Posterior vena cava (tissue), 2 donors: ENCODE measurements at regions of chr3 and their contacts with region 1.

Region 1: DNA sequence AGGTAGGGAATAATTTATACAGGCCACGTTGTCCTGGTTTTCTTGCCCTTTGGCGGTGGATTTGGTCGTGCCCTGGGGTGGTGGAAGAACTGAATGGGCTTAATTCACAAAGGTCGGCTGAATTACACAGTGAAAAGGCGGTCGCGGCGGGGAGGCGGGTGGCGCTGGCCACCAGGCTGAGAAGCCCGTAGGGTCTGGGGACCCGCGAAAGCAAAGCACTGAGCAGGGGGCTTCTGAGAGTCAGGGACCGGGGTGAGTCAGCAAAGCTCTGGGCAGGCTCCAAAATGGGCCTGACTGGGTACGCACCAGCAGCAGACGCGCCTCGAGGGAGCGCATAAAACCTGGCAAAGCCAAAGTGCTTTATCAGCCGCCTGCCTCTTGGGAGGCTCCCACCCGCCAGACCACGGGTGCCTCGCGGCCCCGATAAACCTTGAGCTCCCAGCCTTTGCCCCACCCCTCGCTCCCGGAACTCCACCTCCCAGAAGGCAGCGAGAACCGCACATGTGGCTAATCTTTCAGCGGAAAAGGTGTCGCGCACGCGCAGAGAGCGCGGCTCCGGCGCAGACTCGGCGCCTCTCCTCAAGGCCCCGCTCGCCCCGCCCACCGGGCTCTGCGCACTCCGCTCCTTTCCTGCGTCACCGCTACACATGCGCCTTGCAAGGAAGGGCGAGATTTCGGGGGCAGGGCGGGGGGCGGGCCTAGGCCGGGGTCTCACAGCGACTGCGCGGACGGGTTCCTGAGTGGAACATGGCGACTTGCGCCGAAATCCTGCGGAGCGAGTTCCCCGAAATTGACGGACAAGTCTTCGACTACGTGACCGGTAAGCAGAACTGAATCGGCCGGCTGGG is at the start of gene ABCF3:
- DNase-seq: peak; percentile 100
- total RNA-seq, gene ABCF3: 38.9 to 48.8 TPM

Region 2: DNA sequence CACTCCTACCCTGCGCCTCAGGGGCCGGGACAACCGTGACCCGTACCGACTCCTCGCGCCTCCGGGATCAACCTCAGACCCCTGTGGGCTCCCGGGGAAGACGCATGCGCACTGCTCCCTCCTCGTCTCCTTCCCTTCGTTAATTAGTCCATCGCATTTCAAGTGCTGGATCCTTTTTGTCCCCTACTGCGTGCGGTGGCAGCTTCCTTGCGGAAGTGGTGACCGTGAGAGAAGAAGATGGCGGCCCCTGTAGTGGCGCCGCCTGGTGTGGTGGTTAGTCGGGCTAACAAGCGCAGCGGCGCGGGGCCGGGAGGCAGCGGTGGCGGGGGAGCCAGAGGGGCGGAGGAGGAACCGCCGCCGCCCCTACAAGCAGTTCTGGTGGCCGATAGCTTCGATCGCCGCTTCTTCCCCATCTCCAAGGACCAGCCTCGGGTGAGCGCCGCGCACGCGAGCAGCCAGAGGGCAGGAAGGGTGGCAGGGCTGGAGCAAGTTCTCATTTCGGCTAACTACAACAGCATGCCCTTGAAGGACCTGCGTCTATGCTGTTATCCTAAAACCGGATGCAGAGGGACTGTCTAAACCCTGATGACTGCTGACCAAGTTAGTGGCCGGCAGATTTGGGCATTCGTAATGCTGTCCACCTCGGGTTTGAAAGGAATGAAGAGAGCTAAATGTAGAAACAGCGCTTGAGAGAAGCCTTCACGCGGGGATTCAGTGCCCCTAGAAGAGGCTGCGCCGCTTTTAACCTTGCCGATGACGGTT is 50.4 kb before region 1 on chr3 and contains the start of gene EIF2B5:
- intact Hi-C with region 1: loop called (anchors 1 to 10 kb)
- DNase-seq: peak; percentile 96
- total RNA-seq, gene EIF2B5: 23.3 to 26.4 TPM

Region 3: DNA sequence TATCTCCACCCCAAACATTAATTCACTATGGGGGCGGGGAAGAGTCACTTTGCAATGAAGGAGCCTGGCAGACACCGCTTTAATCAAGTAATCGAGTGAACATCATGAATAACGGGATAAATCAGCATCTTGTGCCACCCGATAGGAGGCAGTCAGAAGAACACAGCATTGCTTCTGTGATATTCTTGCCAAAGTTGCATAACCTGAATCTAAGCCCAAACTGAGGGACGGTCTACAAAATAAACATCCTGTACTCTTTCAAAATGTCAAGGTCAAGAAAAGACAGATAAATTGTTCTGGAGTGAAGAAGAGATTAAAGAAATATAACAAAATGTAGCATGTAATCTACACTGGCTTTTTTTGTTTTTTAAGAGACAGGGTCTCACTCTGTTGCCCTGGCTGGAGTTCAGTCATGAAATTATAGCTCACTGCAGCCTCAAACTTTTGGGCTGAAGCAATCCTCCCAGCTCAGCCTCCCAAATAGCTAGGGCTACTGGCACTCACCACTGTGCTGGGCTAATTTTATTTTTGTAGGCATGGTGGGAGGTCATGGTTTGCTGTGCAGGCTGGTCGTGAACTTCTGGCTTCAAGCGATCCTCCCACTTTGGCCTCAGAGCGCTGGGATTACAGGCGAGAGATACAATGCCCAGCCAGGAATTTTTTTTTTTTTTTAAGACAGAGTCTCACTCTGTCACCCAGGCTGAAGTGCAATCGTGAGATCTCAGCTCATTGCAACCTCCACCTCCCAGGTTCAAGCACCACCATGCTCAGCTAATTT is 23.6 kb after region 1 on chr3:
- intact Hi-C with region 1: no loop called
- DNase-seq: no peak

Region 4: GRCh38 chr3:184314363-184314699 is 128.6 kb after region 1 on chr3 and contains the start of gene EIF4G1:
- intact Hi-C with region 1: loop called in 1 of 2 experiments (anchors 10 kb)
- DNase-seq: peak; percentile 98
- total RNA-seq, gene EIF4G1: 273 to 325 TPM

Region 5: GRCh38 chr3:184417619-184418327 is 232.1 kb after region 1 on chr3:
- intact Hi-C with region 1: no loop called
- DNase-seq: peak; percentile 89